Mammary epithelial cell (primary cell): ENCODE measurements at regions of chr7 and their contacts with region 1.

Region 1: DNA sequence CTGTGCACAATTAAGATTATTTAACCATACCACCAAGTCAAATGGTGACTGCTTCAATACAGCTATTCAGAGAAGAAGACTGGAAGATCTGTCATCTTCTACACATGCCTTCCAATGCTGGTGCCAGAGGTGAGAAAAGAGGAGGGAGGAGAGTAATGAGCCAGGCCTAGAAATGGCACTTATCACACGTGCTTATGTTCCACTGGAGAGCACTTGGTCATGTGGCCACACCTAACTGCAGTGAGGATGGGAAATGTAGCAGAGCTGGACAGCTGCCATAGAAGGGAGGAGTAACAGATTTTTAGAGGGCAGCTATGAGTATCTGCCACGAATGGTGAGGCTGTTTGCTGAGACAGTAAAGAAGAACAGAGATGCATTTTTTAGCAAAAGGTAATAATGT is 77.1 kb downstream of the MPLKIP start:
- DNase-seq: peak; percentile 11
- H3K4me3 ChIP-seq: no peak overlapping the region
- H3K27ac ChIP-seq: no peak overlapping the region
- H3K4me1 ChIP-seq: no peaks in the 10 kb centered on the region
- H3K27me3 ChIP-seq: no peaks in the 10 kb centered on the region
- CTCF ChIP-seq: no peak

Region 2: DNA sequence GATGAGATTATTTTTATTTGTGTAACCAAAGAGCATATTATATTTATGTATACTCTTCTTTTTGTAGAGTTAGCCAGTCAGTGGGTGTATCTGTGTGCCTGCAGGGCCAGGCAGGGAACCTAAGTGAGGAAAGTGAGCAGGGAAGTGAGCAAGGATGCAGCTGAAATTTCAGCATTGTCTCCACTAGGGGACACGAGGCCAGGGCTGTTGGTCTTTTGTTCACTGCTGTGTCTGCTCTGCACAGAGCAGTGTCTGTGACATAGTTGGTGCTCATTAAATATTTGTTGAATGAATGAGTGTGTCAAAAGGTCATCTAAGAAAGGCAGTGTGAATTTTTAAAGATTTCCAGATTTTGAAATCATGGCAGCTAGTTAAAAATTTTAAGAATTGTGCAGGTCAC is 129.3 kb after region 1 on chr7:
- CTCF ChIA-PET with region 1: interaction called, 10 read pairs
- dilution Hi-C with region 1: no loop called
- in situ Hi-C with region 1: no loop called
- intact Hi-C with region 1: no loop called
- DNase-seq: no peak
- H3K4me3 ChIP-seq: no peak overlapping the region
- H3K27ac ChIP-seq: no peak overlapping the region
- H3K4me1 ChIP-seq: no peaks in the 10 kb centered on the region
- H3K27me3 ChIP-seq: no peaks in the 10 kb centered on the region
- CTCF ChIP-seq: peak in 1 of 2 donors; percentile 5

Region 3: GRCh38 chr7:40850017-40850416 is 792.7 kb after region 1 on chr7:
- CTCF ChIA-PET with region 1: no interaction called
- dilution Hi-C with region 1: no loop called
- in situ Hi-C with region 1: no loop called
- intact Hi-C with region 1: no loop called
- DNase-seq: no peak
- H3K4me3 ChIP-seq: no peak overlapping the region
- H3K27ac ChIP-seq: no peak overlapping the region
- H3K4me1 ChIP-seq: peaks cover 10% of the 10 kb centered on the region
- H3K27me3 ChIP-seq: no peaks in the 10 kb centered on the region
- CTCF ChIP-seq: no peak